Ascending aorta (tissue), 2 donors: ENCODE measurements at regions of chr3 and their contacts with region 1.

Region 1: DNA sequence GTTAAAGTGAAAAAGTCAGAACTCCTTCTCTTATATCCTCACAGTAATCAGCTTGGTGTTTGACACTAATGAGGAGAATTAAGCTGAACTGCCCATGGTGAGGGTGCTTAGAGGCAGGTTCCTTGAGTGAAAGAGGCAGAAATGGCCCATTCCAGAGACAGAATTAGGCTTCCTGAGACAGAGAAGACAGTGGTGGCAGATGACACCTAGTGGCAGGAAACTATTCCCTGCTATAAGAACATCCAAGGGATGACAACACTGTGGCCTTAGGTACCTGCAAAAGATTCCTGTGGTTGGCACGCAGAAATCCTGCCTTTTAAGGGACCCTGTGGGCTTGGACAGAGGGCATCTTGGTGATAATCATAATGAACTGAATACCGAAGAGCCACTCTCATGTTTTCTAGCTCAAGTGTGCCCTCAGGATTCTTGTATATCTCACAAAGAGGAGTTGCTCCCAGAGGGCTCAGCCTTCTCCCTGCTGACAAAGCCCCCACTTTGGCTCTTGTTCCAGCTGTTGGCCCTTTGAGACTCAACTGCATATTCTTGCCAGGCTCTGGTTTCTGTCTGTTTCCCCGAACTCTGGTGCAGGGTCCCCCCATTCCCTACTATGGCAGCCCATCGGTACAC is 56.0 kb downstream of the KBTBD12 start:
- DNase-seq: no peak
- H3K4me3 ChIP-seq: no peak overlapping the region
- H3K27ac ChIP-seq: no peak overlapping the region
- H3K4me1 ChIP-seq: no peaks in the 10 kb centered on the region
- H3K27me3 ChIP-seq: no peaks in the 10 kb centered on the region
- CTCF ChIP-seq: peak; percentile 53 to 70 (median 59)

Region 2: GRCh38 chr3:127574880-127575878 is 395.9 kb before region 1 on chr3:
- intact Hi-C with region 1: loop called (anchors 5 kb)
- DNase-seq: peak; percentile 52 to 93
- H3K4me3 ChIP-seq: no peak overlapping the region
- H3K27ac ChIP-seq: no peak overlapping the region
- H3K4me1 ChIP-seq: peaks cover 0 to 4% of the 10 kb centered on the region in 2 donors
- H3K27me3 ChIP-seq: no peaks in the 10 kb centered on the region
- CTCF ChIP-seq: peak; percentile 88 to 99 (median 98)

Region 3: GRCh38 chr3:127929824-127930413 is 41.2 kb before region 1 on chr3:
- intact Hi-C with region 1: no loop called
- DNase-seq: no peak
- H3K4me3 ChIP-seq: no peak overlapping the region
- H3K27ac ChIP-seq: no peak overlapping the region
- H3K4me1 ChIP-seq: no peaks in the 10 kb centered on the region
- H3K27me3 ChIP-seq: no peaks in the 10 kb centered on the region
- CTCF ChIP-seq: no peak

Region 4: GRCh38 chr3:127940116-127940515 is 31.0 kb before region 1 on chr3:
- intact Hi-C with region 1: no loop called
- DNase-seq: no peak
- H3K4me3 ChIP-seq: no peak overlapping the region
- H3K27ac ChIP-seq: no peak overlapping the region
- H3K4me1 ChIP-seq: no peaks in the 10 kb centered on the region
- H3K27me3 ChIP-seq: no peaks in the 10 kb centered on the region
- CTCF ChIP-seq: no peak

Region 5: DNA sequence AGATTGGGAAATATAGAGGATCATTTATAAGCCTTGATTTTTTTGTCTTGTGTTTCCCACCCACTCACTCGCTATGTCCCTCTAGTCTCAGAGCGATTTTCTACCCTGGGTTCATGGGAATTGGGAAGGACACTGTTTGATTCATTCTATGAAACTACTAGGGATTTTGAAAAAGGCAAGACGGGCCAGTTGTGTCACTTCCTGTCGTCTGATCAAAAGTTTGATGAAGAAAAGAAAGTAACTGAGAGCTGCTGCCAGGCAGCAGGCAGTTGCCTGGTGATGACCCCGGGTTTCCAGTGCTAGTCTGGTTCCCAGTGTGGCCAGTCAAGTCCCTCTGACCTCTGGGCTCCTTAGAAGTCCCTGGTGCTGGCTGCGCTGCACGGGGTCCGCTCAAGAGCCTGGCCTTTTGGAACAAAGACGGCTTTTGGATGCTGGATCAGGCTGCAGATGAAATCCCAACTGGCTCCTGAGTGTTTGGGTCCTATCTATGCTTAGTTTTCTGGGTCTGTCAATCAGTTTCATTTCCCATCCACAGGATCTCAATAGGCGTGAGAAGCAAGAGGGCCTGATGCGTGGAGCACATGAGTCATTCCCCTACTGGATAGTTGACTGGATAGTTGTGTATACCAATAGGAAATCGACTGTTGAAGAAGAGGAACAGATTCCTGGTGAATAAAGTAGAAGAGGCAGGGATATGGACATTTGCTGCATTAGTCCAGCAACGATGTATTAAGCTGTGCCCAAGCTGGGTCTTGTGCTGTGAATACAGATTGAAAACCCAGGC is 271.9 kb after region 1 on chr3:
- intact Hi-C with region 1: no loop called
- DNase-seq: no peak
- H3K4me3 ChIP-seq: no peak overlapping the region
- H3K27ac ChIP-seq: no peak overlapping the region
- H3K4me1 ChIP-seq: no peaks in the 10 kb centered on the region
- H3K27me3 ChIP-seq: no peaks in the 10 kb centered on the region
- CTCF ChIP-seq: no peak